ENCODE measurements at regions of chr14 and their contacts with region 1.

Region 1: DNA sequence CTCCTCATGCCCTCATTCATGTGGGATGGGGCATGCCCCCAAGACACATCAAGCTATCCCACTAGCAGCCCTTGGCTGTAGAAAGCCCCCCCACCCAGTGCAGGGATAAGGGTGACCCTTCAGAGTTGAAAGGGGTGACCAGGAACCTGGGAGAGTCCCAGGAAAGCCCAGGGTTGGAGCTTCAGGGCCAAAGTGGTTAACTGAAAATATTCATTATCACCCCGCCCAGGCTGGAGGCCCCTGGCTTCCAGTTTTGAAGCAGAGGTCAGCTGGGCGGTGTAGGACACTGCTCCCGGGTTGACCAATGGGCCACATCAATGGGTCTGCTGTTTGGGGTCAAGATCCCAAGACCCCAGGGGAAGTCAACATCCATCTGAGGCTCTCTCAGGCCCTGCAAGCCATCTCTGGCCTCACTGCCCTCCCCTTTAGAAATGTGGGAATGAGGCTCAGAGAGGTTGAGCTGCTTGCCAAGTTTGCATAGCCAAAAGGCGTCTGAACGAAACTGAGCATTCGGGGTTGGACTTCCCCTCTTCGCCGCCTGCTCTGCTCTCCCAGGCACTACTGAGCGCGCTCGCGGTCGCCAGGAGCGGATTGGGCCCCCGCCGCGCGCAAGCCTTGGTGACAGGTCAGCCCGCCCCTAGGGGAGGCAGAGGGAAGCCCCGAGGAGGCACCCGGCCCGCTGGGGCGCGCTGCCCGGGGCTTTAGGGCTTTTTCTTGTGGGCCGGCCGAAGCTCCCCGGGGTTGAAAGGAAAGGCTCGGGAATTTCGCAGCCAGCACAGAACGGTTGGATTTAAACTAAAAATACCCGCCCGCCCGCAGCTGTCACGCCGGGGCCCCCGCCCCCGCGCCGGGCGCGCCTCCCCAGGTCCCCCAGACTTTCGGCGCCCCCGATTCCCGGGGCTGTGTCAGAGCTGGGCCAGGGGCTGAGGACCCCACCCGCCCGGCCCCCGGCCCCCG is 576 bp downstream of the SYNE3 start:
- DNase-seq: peak; percentile 91
- H3K4me3 Mint-ChIP-seq: peak overlapping the region; percentile 90
- H3K27ac Mint-ChIP-seq: peak overlapping the region; percentile 93
- H3K4me1 Mint-ChIP-seq: peaks cover 71% of the 10 kb centered on the region
- H3K27me3 Mint-ChIP-seq: no peaks in the 10 kb centered on the region

Region 2: DNA sequence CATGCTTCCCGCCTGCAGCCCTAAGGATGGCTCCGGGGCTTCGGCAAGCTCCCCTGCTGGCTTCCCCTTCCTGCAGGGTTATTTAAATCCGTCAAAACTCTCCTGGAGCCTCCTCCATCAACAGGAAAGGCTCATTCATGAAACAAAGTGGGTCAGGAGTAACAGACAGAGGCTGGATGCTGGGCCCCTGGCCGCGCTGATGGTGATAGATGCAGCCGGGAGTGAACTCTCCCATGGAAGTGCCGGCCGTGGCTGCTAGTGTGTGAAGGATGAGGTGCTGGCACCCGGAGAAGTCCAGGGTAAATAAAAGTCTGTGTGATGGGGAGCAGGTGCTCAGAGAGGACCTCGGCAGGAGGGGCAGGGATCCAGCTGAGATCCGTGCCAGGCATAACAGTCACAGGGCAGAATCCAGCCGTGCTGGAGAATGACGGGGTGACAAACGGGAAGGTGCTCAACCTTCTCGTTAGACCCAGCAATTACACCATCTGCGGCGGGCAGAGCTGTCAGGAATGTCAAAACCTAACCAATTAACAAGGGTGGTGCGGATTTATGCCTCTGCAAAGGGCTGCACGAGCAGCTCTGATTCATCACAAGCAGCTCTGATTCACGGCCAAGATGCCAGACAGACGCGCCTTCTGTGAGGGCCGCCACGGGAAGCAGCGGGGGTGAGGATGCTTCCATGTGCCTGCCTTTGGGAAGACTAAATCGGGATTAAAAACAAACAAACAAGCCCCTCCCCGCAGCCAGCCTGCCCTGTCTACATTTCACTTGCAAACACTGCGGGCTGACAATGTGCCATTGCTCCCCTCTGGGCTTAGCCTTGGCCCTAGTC is 55.0 kb before region 1 on chr14:
- CTCF ChIA-PET with region 1: interaction called, 4 read pairs
- POLR2A ChIA-PET with region 1: interaction called, 3 read pairs
- intact Hi-C with region 1: loop called (anchors 2 kb)
- DNase-seq: no peak
- H3K4me3 Mint-ChIP-seq: no peak overlapping the region
- H3K27ac Mint-ChIP-seq: peak overlapping the region; percentile 44
- H3K4me1 Mint-ChIP-seq: peaks cover 53% of the 10 kb centered on the region
- H3K27me3 Mint-ChIP-seq: no peaks in the 10 kb centered on the region

Region 3: GRCh38 chr14:95480109-95480886 is 35.6 kb before region 1 on chr14:
- CTCF ChIA-PET with region 1: interaction called, 9 read pairs
- POLR2A ChIA-PET with region 1: interaction called, 11 read pairs
- intact Hi-C with region 1: loop called (anchors 1 kb)
- DNase-seq: peak; percentile 74
- H3K4me3 Mint-ChIP-seq: no peak overlapping the region
- H3K27ac Mint-ChIP-seq: peak overlapping the region; percentile 90
- H3K4me1 Mint-ChIP-seq: peaks cover 44% of the 10 kb centered on the region
- H3K27me3 Mint-ChIP-seq: no peaks in the 10 kb centered on the region

Region 4: DNA sequence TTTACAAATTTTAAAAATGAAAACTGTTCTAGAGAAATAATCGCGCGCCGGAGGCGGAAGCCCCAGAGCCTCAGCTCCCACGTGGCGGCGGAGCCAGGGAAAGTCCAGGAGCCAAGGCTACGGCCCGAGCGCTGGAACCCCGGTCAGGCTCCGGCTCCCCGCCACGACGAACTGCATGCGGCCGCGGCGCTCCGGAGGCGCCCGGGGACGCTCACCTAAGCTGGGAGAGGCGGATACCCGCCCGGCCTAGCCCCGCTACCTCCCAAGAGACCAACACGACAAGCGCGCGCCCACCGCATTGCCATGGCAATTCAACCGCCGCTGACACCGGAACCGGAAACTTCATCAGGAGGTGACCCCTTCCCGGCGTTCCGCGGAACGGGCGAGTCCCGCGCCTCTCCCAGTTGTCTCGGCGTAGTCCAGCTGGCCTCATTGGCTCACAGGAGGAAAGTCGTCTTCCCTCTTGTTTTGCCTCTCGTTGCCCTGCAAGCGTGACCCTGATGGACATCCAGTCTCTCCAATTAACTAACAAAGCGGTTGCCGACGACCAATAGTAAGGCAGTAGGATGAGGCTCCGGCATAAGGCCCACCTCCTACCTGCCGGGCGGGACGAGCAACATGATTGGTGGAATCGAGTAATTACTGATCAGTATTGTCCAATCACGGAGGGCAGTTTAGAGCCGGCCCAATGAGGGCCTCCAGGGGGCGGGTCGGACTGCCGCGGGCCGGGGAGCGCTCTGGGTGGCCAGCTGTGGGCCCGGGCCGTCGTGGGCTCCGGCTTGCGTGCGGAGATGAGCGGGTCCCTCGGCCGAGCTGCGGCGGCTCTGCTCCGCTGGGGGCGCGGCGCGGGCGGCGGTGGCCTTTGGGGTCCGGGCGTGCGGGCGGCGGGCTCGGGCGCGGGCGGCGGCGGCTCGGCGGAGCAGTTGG is 18.7 kb after region 1 on chr14 and contains the start of gene GLRX5:
- CTCF ChIA-PET with region 1: interaction called, 3 read pairs
- POLR2A ChIA-PET with region 1: interaction called, 17 read pairs
- intact Hi-C with region 1: loop called (anchors 1 kb)
- DNase-seq: peak; percentile 98
- H3K4me3 Mint-ChIP-seq: peak within 1 kb of the TSS; percentile 93
- H3K27ac Mint-ChIP-seq: peak within 1 kb of the TSS; percentile 93
- H3K4me1 Mint-ChIP-seq: peaks cover 52% of the 10 kb centered on the region
- H3K27me3 Mint-ChIP-seq: no peaks in the 10 kb centered on the region
- total RNA-seq, gene GLRX5: 31.8 to 32.2 TPM

Region 5: DNA sequence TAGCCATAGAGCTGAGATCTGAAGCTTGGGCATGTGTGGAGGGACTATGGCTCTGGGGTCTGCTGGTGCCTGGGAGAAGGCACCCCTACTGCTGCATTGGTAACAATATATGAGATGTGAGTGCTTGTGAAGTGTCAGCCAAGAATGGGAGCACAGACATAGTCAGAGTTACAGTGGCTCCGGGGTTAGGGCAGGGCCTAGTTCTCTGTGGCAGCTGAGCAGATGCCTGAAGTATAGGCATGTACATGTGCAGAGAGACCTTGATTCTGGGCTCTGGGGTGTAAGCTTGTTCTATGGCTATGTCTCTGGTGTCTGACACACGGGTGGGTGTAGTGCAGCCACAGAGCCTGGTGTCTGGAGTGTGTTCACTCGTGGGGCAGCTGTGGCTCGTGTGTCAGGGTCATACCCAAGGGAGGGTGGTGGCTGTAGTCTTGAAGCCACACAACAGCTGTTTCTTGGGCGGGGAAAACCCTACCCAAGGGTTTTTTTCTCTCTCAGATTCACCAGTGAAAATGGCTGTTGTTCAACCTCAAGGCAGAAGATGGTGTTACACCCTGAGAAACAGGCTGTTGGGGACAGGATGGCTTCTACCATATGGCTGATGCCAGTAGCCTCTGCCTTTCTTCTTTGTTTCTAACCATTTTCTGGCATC is 209.9 kb after region 1 on chr14:
- CTCF ChIA-PET with region 1: no interaction called
- POLR2A ChIA-PET with region 1: no interaction called
- intact Hi-C with region 1: no loop called
- DNase-seq: no peak
- H3K4me3 Mint-ChIP-seq: no peak overlapping the region
- H3K27ac Mint-ChIP-seq: no peak overlapping the region
- H3K4me1 Mint-ChIP-seq: no peaks in the 10 kb centered on the region
- H3K27me3 Mint-ChIP-seq: peaks cover 35% of the 10 kb centered on the region

Region 6: DNA sequence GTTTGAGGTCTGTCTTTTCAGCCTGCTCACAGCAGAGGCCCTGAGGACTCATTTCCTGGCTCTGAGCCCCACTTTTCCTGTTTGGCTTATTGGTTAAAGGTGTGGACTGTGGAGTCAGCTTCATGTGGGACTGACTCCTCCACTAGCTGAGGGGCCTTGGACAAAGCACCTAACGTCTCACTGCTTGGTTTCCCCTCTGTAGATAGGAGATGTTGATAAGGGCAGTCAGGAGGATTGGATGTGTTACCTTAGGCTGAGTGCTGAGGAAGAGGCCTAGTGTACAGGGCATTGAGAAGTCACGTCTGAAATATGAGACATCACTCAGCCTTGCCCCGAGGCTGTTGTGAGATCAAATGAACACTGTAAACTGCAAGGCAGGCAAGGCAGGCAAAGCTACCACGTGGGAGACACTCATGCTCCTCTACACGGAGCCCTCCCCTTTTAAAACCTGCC is 225.2 kb after region 1 on chr14:
- CTCF ChIA-PET with region 1: no interaction called
- POLR2A ChIA-PET with region 1: no interaction called
- intact Hi-C with region 1: no loop called
- DNase-seq: no peak
- H3K4me3 Mint-ChIP-seq: no peak overlapping the region
- H3K27ac Mint-ChIP-seq: no peak overlapping the region
- H3K4me1 Mint-ChIP-seq: peaks cover 5% of the 10 kb centered on the region
- H3K27me3 Mint-ChIP-seq: no peaks in the 10 kb centered on the region

Measured in activated CD4-positive, alpha-beta memory T cell treated with anti-CD3 and anti-CD28 coated beads for 36 hours (primary cell).